CD8-positive, alpha-beta T cell (primary cell): ENCODE measurements at regions of chr22 and their contacts with region 1.

Region 1: GRCh38 chr22:41091132-41092022 is 1.0 kb upstream of the EP300 start:
- DNase-seq: peak; percentile 99 to 100 (median 99)
- ATAC-seq: peak; percentile 88
- H3K4me3 ChIP-seq: peak overlapping the region; percentile 91 to 97
- H3K4me3 Mint-ChIP-seq: peak overlapping the region; percentile 99
- H3K27ac ChIP-seq: peak overlapping the region; percentile 93 to 96
- H3K27ac Mint-ChIP-seq: peak overlapping the region; percentile 100
- H3K4me1 ChIP-seq: peaks cover 16% of the 10 kb centered on the region
- H3K4me1 Mint-ChIP-seq: peaks cover 31% of the 10 kb centered on the region
- H3K27me3 ChIP-seq: no peaks in the 10 kb centered on the region
- H3K27me3 Mint-ChIP-seq: no peaks in the 10 kb centered on the region
- CTCF ChIP-seq: no peak

Region 2: GRCh38 chr22:40856513-40857308 is 234.7 kb before region 1 on chr22 and contains the starts of genes ST13 and XPNPEP3:
- CTCF ChIA-PET with region 1: no interaction called
- POLR2A ChIA-PET with region 1: interaction called, 6 read pairs
- intact Hi-C with region 1: loop called (anchors 1 to 2 kb)
- DNase-seq: peak; percentile 92 to 98 (median 97)
- ATAC-seq: peak; percentile 88
- H3K4me3 ChIP-seq: peak within 1 kb of the TSS; percentile 85 to 97
- H3K4me3 Mint-ChIP-seq: peak within 1 kb of the TSS; percentile 98
- H3K27ac ChIP-seq: peak within 1 kb of the TSS; percentile 97 to 99
- H3K27ac Mint-ChIP-seq: peak within 1 kb of the TSS; percentile 100
- H3K4me1 ChIP-seq: peaks cover 40% of the 10 kb centered on the region
- H3K4me1 Mint-ChIP-seq: peaks cover 65% of the 10 kb centered on the region
- H3K27me3 ChIP-seq: no peaks in the 10 kb centered on the region
- H3K27me3 Mint-ChIP-seq: no peaks in the 10 kb centered on the region
- CTCF ChIP-seq: peak; percentile 42
- total RNA-seq, gene ST13: 143 to 160 TPM
- total RNA-seq, gene XPNPEP3: 13.9 to 15.2 TPM

Region 3: GRCh38 chr22:41022470-41023298 is 68.7 kb before region 1 on chr22:
- CTCF ChIA-PET with region 1: no interaction called
- POLR2A ChIA-PET with region 1: interaction called, 17 read pairs
- intact Hi-C with region 1: loop called (anchors 1 kb)
- DNase-seq: peak; percentile 46 to 89 (median 80)
- ATAC-seq: peak; percentile 77
- H3K4me3 ChIP-seq: peak overlapping the region; percentile 60 to 77
- H3K4me3 Mint-ChIP-seq: peak overlapping the region; percentile 81
- H3K27ac ChIP-seq: peak overlapping the region; percentile 74 to 84
- H3K27ac Mint-ChIP-seq: peak overlapping the region; percentile 84
- H3K4me1 ChIP-seq: peaks cover 12% of the 10 kb centered on the region
- H3K4me1 Mint-ChIP-seq: peaks cover 14% of the 10 kb centered on the region
- H3K27me3 ChIP-seq: peaks cover 0 to 4% of the 10 kb centered on the region in 2 experiments
- H3K27me3 Mint-ChIP-seq: no peaks in the 10 kb centered on the region
- CTCF ChIP-seq: no peak

Region 4: DNA sequence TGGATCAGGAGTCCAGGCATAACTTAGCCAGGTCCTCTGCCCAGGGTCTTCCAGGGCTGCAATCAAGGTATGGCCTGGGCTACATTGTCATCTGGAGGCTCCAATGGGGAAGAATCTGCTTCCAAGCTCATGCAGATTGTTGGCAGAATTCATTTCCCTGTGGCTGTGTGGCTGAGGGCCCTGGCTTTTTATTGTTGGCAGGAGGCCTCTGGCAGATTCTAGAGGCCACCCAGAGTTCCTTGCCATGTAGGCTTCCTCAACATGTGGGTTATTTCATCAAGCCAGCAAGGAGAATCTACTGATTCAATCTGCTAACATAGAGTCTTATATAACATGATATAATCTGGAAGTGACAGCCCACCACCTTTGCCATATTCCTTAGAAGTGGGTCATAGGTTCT is 15.4 kb before region 1 on chr22:
- CTCF ChIA-PET with region 1: no interaction called
- POLR2A ChIA-PET with region 1: no interaction called
- intact Hi-C with region 1: no loop called
- DNase-seq: no peak
- ATAC-seq: no peak
- H3K4me3 ChIP-seq: no peak overlapping the region
- H3K4me3 Mint-ChIP-seq: no peak overlapping the region
- H3K27ac ChIP-seq: no peak overlapping the region
- H3K27ac Mint-ChIP-seq: no peak overlapping the region
- H3K4me1 ChIP-seq: no peaks in the 10 kb centered on the region
- H3K4me1 Mint-ChIP-seq: no peaks in the 10 kb centered on the region
- H3K27me3 ChIP-seq: no peaks in the 10 kb centered on the region
- H3K27me3 Mint-ChIP-seq: no peaks in the 10 kb centered on the region
- CTCF ChIP-seq: no peak

Region 5: GRCh38 chr22:41197038-41197972 is 105.9 kb after region 1 on chr22:
- CTCF ChIA-PET with region 1: no interaction called
- POLR2A ChIA-PET with region 1: no interaction called
- intact Hi-C with region 1: loop called in 1 of 2 experiments (anchors 2 kb)
- DNase-seq: peak; percentile 52 to 91 (median 82)
- ATAC-seq: peak; percentile 92
- H3K4me3 ChIP-seq: peak overlapping the region; percentile 91 to 94
- H3K4me3 Mint-ChIP-seq: peak overlapping the region; percentile 91
- H3K27ac ChIP-seq: no peak overlapping the region
- H3K27ac Mint-ChIP-seq: no peak overlapping the region
- H3K4me1 ChIP-seq: peaks cover 16% of the 10 kb centered on the region
- H3K4me1 Mint-ChIP-seq: peaks cover 14% of the 10 kb centered on the region
- H3K27me3 ChIP-seq: peaks cover 0 to 3% of the 10 kb centered on the region in 2 experiments
- H3K27me3 Mint-ChIP-seq: no peaks in the 10 kb centered on the region
- CTCF ChIP-seq: no peak

Region 6: DNA sequence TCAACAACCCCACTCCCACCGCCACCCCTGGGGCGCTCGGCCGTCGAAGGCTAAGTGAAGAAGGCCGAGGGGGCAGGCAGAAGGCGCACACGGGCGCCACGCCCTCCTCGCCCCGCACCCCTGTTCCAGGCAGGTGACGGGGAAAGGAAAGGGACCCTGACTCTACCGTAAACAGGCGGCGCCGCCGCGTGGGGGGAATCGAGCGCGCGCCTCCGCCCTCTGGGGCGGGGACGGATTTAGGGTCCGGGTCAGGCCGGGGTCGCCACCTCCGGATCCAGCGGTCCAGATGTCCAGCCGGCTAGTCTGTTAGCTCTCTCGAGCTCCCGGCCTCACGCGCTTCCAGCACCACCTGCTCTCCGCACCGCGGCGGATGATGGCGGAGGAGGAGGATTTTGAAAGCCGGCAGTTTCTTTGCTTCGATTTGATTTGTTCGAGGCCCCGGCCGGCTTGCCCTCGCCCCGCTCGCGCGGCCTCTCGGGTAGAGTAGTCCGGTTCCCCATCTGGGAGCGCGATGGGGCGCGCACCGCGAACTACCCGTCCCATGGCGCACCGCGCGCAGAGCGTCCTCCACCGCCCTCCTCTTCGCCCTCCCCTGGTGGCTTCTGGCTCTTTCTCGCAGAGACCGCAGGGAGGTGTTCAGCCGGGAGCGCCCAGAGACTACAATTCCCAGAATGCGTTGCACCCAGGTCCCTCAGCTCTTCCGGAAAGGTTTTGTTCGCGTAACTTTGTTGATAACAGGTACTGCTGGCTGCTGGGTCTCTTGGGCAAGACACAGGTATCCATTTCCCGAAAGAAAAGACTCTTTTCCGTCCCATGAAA is 194.7 kb after region 1 on chr22 and contains the start of gene RANGAP1:
- CTCF ChIA-PET with region 1: no interaction called
- POLR2A ChIA-PET with region 1: interaction called, 4 read pairs
- intact Hi-C with region 1: loop called in 1 of 2 experiments (anchors 1 kb)
- DNase-seq: peak; percentile 96 to 100 (median 98)
- ATAC-seq: peak; percentile 86
- H3K4me3 ChIP-seq: peak within 1 kb of the TSS; percentile 76 to 99
- H3K4me3 Mint-ChIP-seq: peak within 1 kb of the TSS; percentile 92
- H3K27ac ChIP-seq: peak within 1 kb of the TSS; percentile 87 to 95
- H3K27ac Mint-ChIP-seq: peak within 1 kb of the TSS; percentile 98
- H3K4me1 ChIP-seq: peaks cover 15% of the 10 kb centered on the region
- H3K4me1 Mint-ChIP-seq: peaks cover 32% of the 10 kb centered on the region
- H3K27me3 ChIP-seq: no peaks in the 10 kb centered on the region
- H3K27me3 Mint-ChIP-seq: no peaks in the 10 kb centered on the region
- CTCF ChIP-seq: no peak
- total RNA-seq, gene RANGAP1: 200 to 210 TPM

Region 7: GRCh38 chr22:41448189-41448808 is 356.9 kb after region 1 on chr22:
- CTCF ChIA-PET with region 1: no interaction called
- POLR2A ChIA-PET with region 1: no interaction called
- intact Hi-C with region 1: loop called in 1 of 2 experiments (anchors 5 kb)
- DNase-seq: peak; percentile 77 to 97 (median 88)
- ATAC-seq: peak; percentile 70
- H3K4me3 ChIP-seq: peak overlapping the region; percentile 79 to 96
- H3K4me3 Mint-ChIP-seq: peak overlapping the region; percentile 90
- H3K27ac ChIP-seq: peak overlapping the region; percentile 78 to 99
- H3K27ac Mint-ChIP-seq: peak overlapping the region; percentile 98
- H3K4me1 ChIP-seq: peaks cover 11% of the 10 kb centered on the region
- H3K4me1 Mint-ChIP-seq: peaks cover 23% of the 10 kb centered on the region
- H3K27me3 ChIP-seq: no peaks in the 10 kb centered on the region
- H3K27me3 Mint-ChIP-seq: no peaks in the 10 kb centered on the region
- CTCF ChIP-seq: no peak

Region 8: DNA sequence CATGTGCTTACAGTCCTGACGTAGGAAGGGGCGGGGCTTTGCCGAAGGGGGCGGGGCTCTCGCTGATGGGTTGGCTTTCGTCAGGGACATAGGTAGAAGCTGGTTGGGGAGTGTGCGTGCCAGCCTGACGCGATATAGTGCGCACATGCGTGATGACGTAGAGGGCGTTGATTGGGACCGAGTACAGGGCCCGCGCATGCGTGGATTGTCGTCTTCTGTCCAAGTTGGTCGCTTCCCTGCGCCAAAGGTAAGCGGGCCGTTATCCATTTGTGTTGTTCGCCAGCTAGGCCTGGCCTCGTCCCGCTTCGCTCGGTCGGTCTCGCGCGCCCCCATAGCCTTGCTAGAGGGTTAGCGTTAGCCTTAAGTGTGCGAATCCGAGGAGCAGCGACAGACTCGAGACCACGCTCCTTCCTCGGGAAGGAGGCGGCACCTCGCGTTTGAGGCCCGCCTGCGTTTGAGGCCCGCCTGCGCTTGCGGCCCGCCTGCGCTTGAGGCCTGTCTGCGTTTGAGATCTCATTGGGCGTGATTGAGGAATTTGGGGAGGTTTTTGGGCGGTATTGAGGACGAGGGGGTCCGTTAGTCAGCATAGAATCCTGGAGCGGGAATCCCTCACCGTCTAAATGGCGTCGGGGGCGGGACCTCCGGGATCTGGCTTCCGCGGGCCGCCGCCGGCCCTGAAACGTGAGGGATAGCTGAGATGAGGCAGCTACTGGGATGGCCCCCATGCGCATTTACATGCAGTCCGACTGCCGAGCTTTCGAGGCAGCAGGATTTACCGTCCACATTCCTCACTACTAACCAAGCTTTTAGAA is 529.9 kb after region 1 on chr22 and contains the start of gene XRCC6:
- CTCF ChIA-PET with region 1: no interaction called
- POLR2A ChIA-PET with region 1: no interaction called
- intact Hi-C with region 1: loop called in 1 of 2 experiments (anchors 2 kb)
- DNase-seq: peak; percentile 99 to 100 (median 100)
- ATAC-seq: peak; percentile 93
- H3K4me3 ChIP-seq: peak within 1 kb of the TSS; percentile 84 to 100
- H3K4me3 Mint-ChIP-seq: peak within 1 kb of the TSS; percentile 100
- H3K27ac ChIP-seq: peak within 1 kb of the TSS; percentile 95 to 100
- H3K27ac Mint-ChIP-seq: peak within 1 kb of the TSS; percentile 100
- H3K4me1 ChIP-seq: peaks cover 25% of the 10 kb centered on the region
- H3K4me1 Mint-ChIP-seq: peaks cover 52% of the 10 kb centered on the region
- H3K27me3 ChIP-seq: no peaks in the 10 kb centered on the region
- H3K27me3 Mint-ChIP-seq: no peaks in the 10 kb centered on the region
- CTCF ChIP-seq: no peak
- total RNA-seq, gene XRCC6: 202 to 205 TPM